ENCODE measurements at regions of chr11 and their contacts with region 1.

Region 1: GRCh38 chr11:13772223-13773046 is 104.0 kb downstream of the FAR1 start:
- DNase-seq: no peak
- H3K4me3 Mint-ChIP-seq: no peak overlapping the region
- H3K27ac Mint-ChIP-seq: no peak overlapping the region
- H3K4me1 Mint-ChIP-seq: no peaks in the 10 kb centered on the region
- H3K27me3 Mint-ChIP-seq: peaks cover 21% of the 10 kb centered on the region

Region 2: GRCh38 chr11:12331239-12331874 is 1441.1 kb before region 1 on chr11:
- intact Hi-C with region 1: no loop called
- DNase-seq: peak; percentile 43
- H3K4me3 Mint-ChIP-seq: no peak overlapping the region
- H3K27ac Mint-ChIP-seq: no peak overlapping the region
- H3K4me1 Mint-ChIP-seq: peaks cover 3% of the 10 kb centered on the region
- H3K27me3 Mint-ChIP-seq: no peaks in the 10 kb centered on the region

Region 3: GRCh38 chr11:14249121-14249963 is 476.9 kb after region 1 on chr11:
- intact Hi-C with region 1: loop called (anchors 1 kb)
- DNase-seq: peak; percentile 46
- H3K4me3 Mint-ChIP-seq: no peak overlapping the region
- H3K27ac Mint-ChIP-seq: no peak overlapping the region
- H3K4me1 Mint-ChIP-seq: peaks cover 15% of the 10 kb centered on the region
- H3K27me3 Mint-ChIP-seq: peaks cover 21% of the 10 kb centered on the region